ENCODE measurements at regions of chr1 and their contacts with region 1.

Region 1: DNA sequence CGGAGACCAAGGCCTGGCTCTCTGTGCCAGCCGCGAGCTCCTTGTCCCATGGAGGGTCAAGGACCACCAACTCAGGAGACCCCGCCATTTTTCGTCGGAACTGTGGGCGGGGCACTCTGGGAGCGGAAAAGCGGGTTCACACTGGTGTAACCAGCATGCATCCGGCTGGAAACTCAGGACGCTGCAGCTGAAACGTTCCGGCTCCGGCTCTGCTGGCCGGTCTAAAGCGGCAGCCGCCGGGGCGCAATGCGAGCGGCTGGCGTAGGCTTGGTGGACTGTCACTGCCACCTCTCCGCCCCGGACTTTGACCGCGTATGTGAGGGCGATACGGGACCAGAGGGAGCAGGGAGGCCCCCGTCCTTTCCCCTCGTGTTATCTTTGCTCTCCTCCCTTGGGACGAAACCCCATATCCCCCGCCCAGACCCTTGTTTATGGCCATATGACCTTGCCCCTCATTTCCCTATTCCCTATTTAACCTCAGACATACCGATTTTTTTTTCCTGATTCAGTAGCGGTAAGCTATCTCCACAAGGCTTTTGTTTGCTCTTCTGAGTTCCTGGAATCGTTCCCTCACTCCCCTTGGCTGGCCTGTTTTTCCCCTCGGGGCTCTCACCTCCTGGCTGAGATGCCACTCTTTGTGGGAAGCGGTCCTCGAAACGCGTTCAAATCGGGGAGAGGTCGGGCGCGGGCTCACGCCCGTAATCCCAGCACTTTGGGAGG is at the starts of genes NSL1 and TATDN3:
- DNase-seq: peak; percentile 92 to 98
- ATAC-seq: peak; percentile 99
- H3K4me3 ChIP-seq: peak within 1 kb of the TSS; percentile 87 to 98
- H3K27ac ChIP-seq: peak within 1 kb of the TSS; percentile 28 to 93
- H3K4me1 ChIP-seq: no peaks in the 10 kb centered on the region
- H3K27me3 ChIP-seq: no peaks in the 10 kb centered on the region
- total RNA-seq, gene NSL1: 26.3 to 30.5 TPM
- total RNA-seq, gene TATDN3: 10.9 to 11.4 TPM

Region 2: DNA sequence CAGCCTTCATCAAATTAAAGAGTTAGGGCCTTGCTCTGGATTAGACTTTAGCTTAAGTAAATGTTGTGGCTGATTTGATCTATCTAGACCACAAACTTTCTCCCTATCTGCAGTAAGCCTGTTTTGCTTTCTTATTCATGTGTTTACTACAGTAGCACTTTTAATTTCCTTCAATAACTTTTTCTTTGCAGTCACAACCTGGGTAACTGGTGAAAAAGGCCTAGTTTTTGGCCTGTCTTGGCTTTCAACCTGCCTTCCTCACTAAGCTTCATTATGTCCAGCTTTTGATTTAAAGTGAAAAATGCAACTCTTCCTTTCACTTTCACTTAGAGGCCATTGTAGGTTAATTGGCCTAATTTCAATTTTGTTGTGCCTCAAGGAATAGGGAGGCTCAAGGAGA is 948.8 kb before region 1 on chr1:
- intact Hi-C with region 1: no loop called
- DNase-seq: no peak
- ATAC-seq: no peak
- H3K4me3 ChIP-seq: no peak overlapping the region
- H3K27ac ChIP-seq: no peak overlapping the region
- H3K4me1 ChIP-seq: no peaks in the 10 kb centered on the region
- H3K27me3 ChIP-seq: no peaks in the 10 kb centered on the region

Region 3: DNA sequence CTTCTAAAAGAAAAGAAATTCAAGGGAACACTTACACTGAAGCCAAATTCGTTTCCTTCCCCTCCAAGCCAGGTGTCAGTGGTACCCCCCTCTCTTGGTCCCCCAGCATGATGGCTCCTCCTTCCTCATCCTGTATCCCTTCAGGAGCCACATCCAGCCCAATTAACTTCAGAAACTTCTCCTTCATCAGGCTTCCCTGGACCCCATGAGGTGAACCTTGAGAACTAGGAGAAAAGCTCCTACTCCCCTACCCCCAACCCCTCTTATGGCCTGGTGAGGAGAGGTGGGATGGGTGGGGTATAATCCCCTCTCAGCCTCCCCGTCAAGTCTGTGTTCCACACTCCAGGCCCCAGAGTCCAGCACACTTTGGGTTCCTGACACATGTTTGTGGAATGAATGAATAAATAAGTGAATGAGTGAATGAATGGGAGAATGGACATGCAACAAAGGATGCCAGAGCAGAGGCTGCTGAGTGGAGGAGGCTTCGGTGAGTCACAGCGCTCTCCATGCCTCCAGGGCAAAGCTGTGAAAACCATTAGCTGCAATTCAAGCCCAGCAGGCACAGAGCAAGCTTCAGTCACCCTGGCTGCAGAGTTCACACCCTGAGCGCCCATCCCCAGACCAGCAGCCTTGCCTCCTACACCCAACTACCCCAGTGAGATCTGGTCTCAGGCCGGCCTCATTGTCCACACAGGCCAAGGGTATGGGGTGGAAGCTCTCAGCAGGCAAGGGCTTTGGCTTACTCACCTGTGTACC is 136.0 kb before region 1 on chr1:
- intact Hi-C with region 1: no loop called
- DNase-seq: no peak
- ATAC-seq: no peak
- H3K4me3 ChIP-seq: no peak overlapping the region
- H3K27ac ChIP-seq: no peak overlapping the region
- H3K4me1 ChIP-seq: no peaks in the 10 kb centered on the region
- H3K27me3 ChIP-seq: no peaks in the 10 kb centered on the region

Region 4: DNA sequence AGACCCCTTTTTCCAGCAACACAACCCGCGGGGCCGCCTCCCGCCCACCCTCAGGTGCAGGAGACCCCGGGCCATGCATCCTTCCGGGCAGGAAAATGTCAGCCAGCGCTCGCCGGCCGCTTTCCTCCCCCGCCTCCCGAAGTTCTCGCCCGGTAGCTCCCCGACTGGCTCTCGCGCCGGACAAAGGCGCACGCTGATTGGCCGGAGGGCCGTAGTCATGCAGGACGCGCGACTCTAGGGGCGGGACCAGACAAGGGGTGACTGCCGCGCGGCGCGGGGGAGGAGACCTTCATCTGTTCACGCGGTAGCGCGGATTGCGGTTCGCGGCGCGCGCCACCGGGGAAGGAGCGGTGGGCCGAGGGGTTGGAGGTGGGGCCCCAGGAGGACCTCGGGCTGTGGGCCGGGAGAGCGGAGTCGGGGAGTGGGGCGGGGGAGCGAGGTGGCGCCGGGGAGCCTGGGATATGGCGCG is 66.2 kb after region 1 on chr1 and contains the start of gene FLVCR1:
- intact Hi-C with region 1: loop called in 1 of 2 experiments (anchors 5 kb)
- DNase-seq: peak; percentile 99
- ATAC-seq: peak; percentile 100
- H3K4me3 ChIP-seq: peak within 1 kb of the TSS; percentile 51 to 70
- H3K27ac ChIP-seq: peak within 1 kb of the TSS in 1 of 2 donors; percentile 74
- H3K4me1 ChIP-seq: peaks cover 0 to 2% of the 10 kb centered on the region in 2 donors
- H3K27me3 ChIP-seq: no peaks in the 10 kb centered on the region
- total RNA-seq, gene FLVCR1: 6.9 to 7.7 TPM